ENCODE measurements at regions of chr5 and their contacts with region 1.

Region 1: GRCh38 chr5:126776497-126777256 is at the start of gene LMNB1:
- DNase-seq: peak; percentile 37
- H3K4me3 ChIP-seq: peak within 1 kb of the TSS; percentile 93
- CTCF ChIP-seq: no peak

Region 2: DNA sequence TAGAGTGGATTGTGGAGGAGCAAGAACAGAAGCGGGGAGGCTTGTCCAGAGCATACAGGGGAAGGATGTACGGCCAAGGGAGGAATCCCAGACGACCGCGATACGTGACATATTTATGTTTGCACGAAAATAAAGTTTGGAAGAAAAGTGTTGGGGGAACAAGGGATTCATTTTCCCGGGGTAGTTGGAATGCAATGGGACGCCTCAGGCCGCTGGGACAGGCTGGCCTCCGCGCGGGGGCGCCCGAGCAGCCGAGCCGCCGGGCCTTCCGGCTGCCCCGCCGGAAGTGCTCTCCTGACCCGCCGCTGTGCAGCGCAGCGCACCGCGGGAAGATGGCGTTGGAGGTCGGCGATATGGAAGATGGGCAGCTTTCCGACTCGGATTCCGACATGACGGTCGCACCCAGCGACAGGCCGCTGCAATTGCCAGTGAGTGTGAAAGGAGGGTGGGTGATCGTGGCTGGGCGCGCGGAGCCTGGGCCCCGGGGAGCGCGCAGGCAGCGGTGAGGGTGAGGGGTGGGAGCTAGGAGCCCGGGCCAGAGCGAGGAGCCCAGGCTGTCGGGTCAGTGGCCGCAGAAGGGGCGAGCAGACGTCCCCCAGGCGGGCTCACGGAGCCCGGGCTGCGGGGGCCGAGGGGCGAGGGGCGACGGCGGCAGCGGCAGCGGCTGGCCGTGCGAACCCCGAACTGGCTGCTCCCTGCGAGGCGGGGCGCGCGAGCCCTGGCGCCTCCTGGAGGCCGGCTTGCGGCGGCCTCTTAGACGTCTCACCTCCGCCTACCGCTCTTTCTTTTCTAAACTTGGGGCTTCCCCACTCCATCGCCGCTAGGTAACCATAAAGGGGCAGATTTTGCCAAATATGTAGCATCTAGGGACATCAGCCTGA is 175.8 kb before region 1 on chr5 and contains the start of gene PHAX:
- CTCF ChIA-PET with region 1: interaction called, 10 read pairs
- POLR2A ChIA-PET with region 1: interaction called, 3 read pairs
- DNase-seq: no peak
- H3K4me3 ChIP-seq: peak within 1 kb of the TSS; percentile 96
- CTCF ChIP-seq: peak; percentile 76

Region 3: GRCh38 chr5:126676195-126676624 is 100.5 kb before region 1 on chr5:
- CTCF ChIA-PET with region 1: interaction called, 303 read pairs
- POLR2A ChIA-PET with region 1: interaction called, 3 read pairs
- DNase-seq: no peak
- H3K4me3 ChIP-seq: no peak overlapping the region
- CTCF ChIP-seq: peak; percentile 67

Region 4: DNA sequence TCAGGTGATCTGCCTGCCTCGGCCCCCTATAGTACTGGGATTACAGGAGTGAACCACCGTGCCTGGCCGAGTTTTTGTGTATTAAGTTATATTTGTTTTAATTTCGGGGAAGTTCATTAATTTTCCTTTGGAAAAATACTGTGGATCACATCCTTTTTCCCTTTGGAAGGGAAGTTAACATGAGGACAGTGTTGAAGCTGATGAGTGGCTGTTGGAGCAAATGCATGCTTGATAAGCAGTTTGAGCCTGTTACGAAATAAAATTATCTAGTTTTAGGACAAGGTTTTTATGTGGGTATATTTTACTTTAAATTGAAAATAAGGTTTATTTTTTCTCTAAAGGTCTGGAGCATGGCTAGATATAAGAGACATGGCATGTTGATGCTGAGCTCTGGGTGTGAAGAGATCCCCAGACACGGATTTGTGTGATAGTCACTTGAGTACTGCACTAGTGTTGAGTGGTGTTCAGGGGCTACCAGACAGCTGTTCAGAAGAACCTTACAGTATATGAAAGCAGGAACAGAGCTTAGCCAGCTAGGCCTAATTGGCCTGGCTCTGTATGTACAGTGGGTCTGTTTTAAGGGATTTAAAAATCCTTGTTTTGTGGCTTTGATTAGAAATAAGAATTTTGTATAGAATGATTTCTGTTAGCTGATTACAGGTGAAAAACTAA is 17.6 kb after region 1 on chr5:
- CTCF ChIA-PET with region 1: interaction called, 82 read pairs
- POLR2A ChIA-PET with region 1: no interaction called
- DNase-seq: no peak
- H3K4me3 ChIP-seq: no peak overlapping the region
- CTCF ChIP-seq: no peak

Region 5: GRCh38 chr5:126808521-126808988 is 31.9 kb after region 1 on chr5:
- CTCF ChIA-PET with region 1: interaction called, 96 read pairs
- POLR2A ChIA-PET with region 1: no interaction called
- DNase-seq: no peak
- H3K4me3 ChIP-seq: no peak overlapping the region
- CTCF ChIP-seq: peak; percentile 49